ENCODE measurements at regions of chr11 and their contacts with region 1.

Region 1: DNA sequence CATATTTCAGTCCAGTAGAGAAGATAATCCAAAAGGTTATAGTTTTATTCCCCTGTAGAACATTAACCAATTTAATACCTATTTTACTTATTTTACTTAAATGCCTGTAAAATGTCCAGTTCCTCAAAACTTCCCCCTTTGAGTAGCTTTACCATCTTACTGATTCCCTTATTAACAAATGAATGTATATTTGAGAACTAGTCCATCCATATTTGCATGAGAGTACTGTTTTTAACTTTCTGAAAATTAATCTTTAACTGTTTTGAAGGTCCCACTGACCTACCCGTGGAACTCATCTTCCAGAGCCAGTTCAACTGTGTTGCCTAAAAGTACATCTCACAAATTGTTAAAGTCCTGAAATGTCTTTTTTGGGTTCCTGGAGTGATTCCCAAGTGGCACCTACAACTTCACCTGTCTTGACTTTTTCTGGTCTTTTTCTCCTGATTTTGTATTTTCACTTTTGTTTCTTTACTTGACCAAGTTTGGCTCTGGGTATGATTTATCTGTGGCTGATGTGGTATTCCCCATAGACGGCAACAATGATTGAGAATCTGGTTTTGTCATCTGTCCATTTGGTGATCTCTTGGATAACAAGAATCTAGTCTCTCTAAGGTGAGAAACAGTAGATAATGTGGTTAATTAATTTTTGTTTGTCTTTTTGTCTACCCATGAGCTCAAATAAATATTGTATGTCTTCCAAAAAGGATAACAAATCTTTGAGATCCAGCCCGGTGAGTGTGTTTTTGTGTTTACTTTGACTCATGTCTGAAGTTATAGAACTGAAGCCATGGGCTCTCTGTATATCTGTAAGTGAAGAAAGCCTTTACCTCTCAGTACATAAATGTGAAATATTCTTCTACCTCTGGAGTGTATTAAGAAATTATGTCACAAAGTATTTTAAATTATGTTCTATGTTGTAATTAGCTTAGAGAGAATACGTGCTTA is 174.2 kb downstream of the ETS1 start:
- DNase-seq: no peak
- H3K4me3 Mint-ChIP-seq: peak overlapping the region; percentile 35
- H3K27ac Mint-ChIP-seq: peak overlapping the region; percentile 64
- H3K4me1 Mint-ChIP-seq: peaks cover 49% of the 10 kb centered on the region
- H3K27me3 Mint-ChIP-seq: no peaks in the 10 kb centered on the region

Region 2: GRCh38 chr11:128448200-128448886 is 35.2 kb after region 1 on chr11:
- intact Hi-C with region 1: loop called (anchors 5 kb)
- DNase-seq: no peak
- H3K4me3 Mint-ChIP-seq: no peak overlapping the region
- H3K27ac Mint-ChIP-seq: peak overlapping the region; percentile 59
- H3K4me1 Mint-ChIP-seq: peaks cover 60% of the 10 kb centered on the region
- H3K27me3 Mint-ChIP-seq: peaks cover 1% of the 10 kb centered on the region